Left cardiac atrium (tissue), 4 donors: ENCODE measurements at regions of chr5 and their contacts with region 1.

Region 1: GRCh38 chr5:168947212-168947868 is 353.6 kb downstream of the SLIT3 start:
- DNase-seq: peak; percentile 62
- ATAC-seq: peak; percentile 62 to 71

Region 2: GRCh38 chr5:168706655-168707069 is 240.7 kb before region 1 on chr5:
- intact Hi-C with region 1: loop called (anchors 10 kb)
- DNase-seq: peak; percentile 48
- ATAC-seq: peak; percentile 62 to 70